GM12878 (cell line): ENCODE measurements at regions of chr5 and their contacts with region 1.

Region 1: DNA sequence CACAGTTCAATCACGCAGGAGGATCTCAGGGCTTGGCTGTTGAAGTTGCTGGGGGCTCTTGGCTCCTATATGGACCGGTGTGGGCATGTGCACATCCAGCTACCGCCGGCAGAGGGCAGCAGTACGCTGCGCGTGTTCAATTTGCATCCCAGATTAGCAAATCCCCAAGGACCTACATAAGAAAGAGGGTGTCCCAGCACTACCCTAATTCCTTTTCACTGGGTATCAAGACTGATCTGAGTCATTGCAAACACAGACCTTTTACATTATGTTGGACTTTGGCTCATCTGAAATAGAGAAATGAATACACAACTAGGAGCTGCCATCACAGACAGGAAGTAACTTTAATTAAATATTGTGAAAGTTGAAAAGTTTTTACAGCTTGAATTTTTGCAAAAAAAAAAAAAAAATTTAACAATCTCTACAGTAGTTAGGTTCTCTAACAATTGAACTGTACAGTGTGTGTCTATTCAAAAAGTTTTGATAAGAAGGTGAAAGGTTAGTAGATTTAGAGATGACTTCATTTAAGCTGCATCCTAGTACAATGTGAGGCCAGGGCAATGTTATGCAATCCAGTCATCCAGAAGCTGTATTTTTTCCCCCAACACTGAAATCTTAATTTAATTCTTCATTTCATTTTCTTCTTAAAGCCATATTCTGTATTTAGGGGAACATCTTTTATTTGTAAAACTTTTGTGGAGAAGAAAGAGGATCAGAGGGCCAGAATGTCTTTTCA is 404.0 kb downstream of the EBF1 start:
- DNase-seq: peak; percentile 85
- ATAC-seq: peak; percentile 94
- H3K4me3 ChIP-seq: no peak overlapping the region
- H3K27ac ChIP-seq: no peak overlapping the region
- H3K4me1 ChIP-seq: no peaks in the 10 kb centered on the region
- H3K27me3 ChIP-seq: no peaks in the 10 kb centered on the region
- CTCF ChIP-seq: peak; percentile 88 to 97 (median 88)
- EP300 ChIP-seq: peak; percentile 41 to 66; a peak in 2 of 4 replicates
- POLR2A ChIP-seq: no peak
- RAD21 ChIP-seq: peak; percentile 88

Region 2: DNA sequence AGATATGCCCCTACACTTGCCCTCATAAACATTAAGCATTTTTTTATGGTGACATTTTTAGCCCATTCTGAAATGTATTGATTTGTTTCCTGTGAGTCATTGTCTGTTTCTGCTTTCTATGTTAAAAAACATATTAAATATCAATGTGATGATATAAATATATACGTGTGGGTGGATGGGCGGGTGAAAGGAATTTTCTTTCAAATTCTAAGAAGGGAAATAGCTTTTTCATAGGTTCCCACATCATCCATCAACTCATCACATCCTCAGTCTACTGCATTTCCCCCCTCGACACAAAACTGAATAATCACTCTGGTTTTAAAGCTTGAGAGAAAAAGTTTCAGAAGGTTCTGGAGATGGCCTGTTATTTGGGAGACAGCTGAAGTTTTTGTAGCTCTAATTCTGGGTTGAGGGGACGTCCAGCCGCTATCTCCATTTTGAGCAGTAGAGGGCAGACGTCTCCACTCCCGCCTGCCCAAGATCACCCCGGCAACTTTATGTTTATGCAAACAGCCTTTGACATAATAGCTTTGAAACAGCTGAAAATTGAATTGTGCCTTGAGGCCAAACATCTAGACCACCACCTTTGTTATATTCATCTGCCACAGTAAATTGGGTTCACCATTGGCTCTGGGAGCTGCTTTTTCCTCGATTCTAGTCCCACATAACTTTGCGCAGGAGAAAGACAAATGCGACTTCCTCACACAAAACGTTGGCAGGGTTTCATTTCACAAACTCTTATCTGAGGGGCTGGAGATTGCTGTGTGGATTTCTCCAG is 620.6 kb before region 1 on chr5:
- CTCF ChIA-PET with region 1: interaction called, 27 read pairs
- POLR2A ChIA-PET with region 1: no interaction called
- RAD21 ChIA-PET with region 1: interaction called, 11 read pairs
- SMC1A ChIA-PET with region 1: interaction called, 6 read pairs
- in situ Hi-C with region 1: no loop called
- intact Hi-C with region 1: loop called (anchors 5 kb)
- DNase-seq: no peak
- ATAC-seq: peak; percentile 94
- H3K4me3 ChIP-seq: no peak overlapping the region
- H3K27ac ChIP-seq: no peak overlapping the region
- H3K4me1 ChIP-seq: no peaks in the 10 kb centered on the region
- H3K27me3 ChIP-seq: no peaks in the 10 kb centered on the region; a peak in 1 of 4 replicates
- CTCF ChIP-seq: peak; percentile 78 to 81 (median 80)
- EP300 ChIP-seq: no peak
- POLR2A ChIP-seq: no peak
- RAD21 ChIP-seq: peak; percentile 71

Region 3: DNA sequence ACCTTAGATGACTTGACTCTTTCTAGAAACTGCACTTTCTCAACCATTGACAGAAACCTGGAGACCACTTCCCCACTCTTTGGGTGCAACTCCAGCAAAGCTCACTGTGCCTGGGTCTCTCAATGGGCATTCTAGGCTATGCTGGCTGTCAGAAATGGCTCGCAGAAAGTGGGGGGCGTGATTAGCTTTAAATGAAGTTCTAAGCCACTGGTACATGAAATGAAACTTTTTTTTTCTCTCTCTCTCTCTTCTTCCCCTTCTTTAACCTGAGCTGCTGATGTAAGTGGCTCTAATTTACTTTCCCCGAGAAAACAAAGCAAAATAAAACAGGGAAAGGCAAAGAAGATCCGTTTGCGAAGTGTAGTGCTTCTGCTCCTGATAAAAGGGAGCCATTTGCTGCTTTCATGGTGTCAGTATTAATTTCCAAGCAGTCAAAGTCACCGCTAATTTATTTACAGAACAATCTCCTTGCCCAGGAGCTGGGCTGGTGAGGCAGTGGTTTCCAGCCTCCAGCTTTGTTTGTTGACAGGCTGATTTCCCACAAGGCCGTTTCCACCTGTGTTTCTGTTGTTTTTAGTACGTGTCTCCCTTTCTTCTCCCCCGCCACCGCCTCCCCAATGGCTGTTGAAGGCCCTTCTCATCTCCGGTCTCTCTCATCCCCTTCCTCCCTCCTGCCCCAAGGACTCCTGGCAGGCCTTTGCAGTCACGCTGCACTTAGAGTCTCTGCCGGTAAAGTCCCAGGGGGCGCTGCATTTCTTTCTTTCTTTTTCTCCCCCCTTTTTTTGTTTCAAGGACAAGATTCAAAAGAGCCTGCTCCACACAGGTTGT is 18.9 kb before region 1 on chr5:
- CTCF ChIA-PET with region 1: interaction called, 18 read pairs
- POLR2A ChIA-PET with region 1: no interaction called
- RAD21 ChIA-PET with region 1: interaction called, 10 read pairs
- SMC1A ChIA-PET with region 1: interaction called, 11 read pairs
- in situ Hi-C with region 1: no loop called
- intact Hi-C with region 1: no loop called
- DNase-seq: no peak
- ATAC-seq: peak; percentile 83
- H3K4me3 ChIP-seq: no peak overlapping the region
- H3K27ac ChIP-seq: no peak overlapping the region
- H3K4me1 ChIP-seq: peaks cover 3% of the 10 kb centered on the region; the same call in 1 of the 2 replicates
- H3K27me3 ChIP-seq: no peaks in the 10 kb centered on the region; a peak in 1 of 4 replicates
- CTCF ChIP-seq: peak; percentile 19 to 37 (median 31); a peak in 4 of 6 replicates
- EP300 ChIP-seq: no peak
- POLR2A ChIP-seq: no peak
- RAD21 ChIP-seq: 0 out of 2 replicates have a peak, but pooled peaks have one; percentile 25

Region 4: GRCh38 chr5:158770506-158770905 is 74.7 kb after region 1 on chr5:
- CTCF ChIA-PET with region 1: interaction called, 15 read pairs
- POLR2A ChIA-PET with region 1: no interaction called
- RAD21 ChIA-PET with region 1: interaction called, 18 read pairs
- SMC1A ChIA-PET with region 1: interaction called, 13 read pairs
- in situ Hi-C with region 1: no loop called
- intact Hi-C with region 1: no loop called
- DNase-seq: no peak
- ATAC-seq: no peak
- H3K4me3 ChIP-seq: no peak overlapping the region
- H3K27ac ChIP-seq: no peak overlapping the region
- H3K4me1 ChIP-seq: peaks cover 4% of the 10 kb centered on the region; the same call in 1 of the 2 replicates
- H3K27me3 ChIP-seq: no peaks in the 10 kb centered on the region
- CTCF ChIP-seq: peak in 2 of 3 experiments; percentile 17 to 38; a peak in 2 of 6 replicates
- EP300 ChIP-seq: no peak
- POLR2A ChIP-seq: no peak
- RAD21 ChIP-seq: 0 out of 2 replicates have a peak, but pooled peaks have one; percentile 15

Region 5: DNA sequence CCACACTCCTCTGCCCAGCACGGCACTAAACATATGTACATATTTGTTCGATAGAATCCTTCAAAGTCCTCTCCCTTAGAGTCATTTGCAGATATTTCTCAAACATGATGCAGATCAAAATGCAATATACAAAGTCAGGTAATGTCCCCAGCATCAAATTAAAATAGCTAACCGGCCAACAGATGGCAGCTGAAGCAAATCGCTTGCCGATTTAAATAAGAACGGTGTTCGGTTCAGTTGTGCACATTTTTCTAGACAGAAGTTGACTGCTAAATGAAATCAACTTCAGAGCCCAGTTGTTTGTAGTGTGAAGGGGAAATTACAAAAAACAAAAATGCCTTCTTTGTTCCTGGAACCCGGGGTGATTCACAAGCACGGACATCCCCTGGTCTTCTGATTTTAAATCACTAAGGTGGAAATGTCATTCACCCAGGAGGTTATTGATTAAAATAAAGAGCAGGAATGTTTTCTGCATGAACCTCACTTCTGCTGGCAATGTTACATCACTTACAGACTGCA is 184.8 kb after region 1 on chr5:
- CTCF ChIA-PET with region 1: interaction called, 19 read pairs
- POLR2A ChIA-PET with region 1: interaction called, 4 read pairs
- RAD21 ChIA-PET with region 1: interaction called, 62 read pairs
- SMC1A ChIA-PET with region 1: interaction called, 31 read pairs
- in situ Hi-C with region 1: no loop called
- intact Hi-C with region 1: loop called (anchors 1 kb)
- DNase-seq: no peak
- ATAC-seq: peak; percentile 31
- H3K4me3 ChIP-seq: peak overlapping the region; percentile 24; the same call in 1 of the 2 replicates
- H3K27ac ChIP-seq: peak overlapping the region; percentile 83
- H3K4me1 ChIP-seq: peaks cover 66% of the 10 kb centered on the region
- H3K27me3 ChIP-seq: no peaks in the 10 kb centered on the region
- CTCF ChIP-seq: peak in 2 of 3 experiments; percentile 29 to 53; a peak in 3 of 6 replicates
- EP300 ChIP-seq: peak in 1 of 2 experiments; percentile 2; a peak in 1 of 4 replicates
- POLR2A ChIP-seq: no peak
- RAD21 ChIP-seq: peak; percentile 56

Region 6: DNA sequence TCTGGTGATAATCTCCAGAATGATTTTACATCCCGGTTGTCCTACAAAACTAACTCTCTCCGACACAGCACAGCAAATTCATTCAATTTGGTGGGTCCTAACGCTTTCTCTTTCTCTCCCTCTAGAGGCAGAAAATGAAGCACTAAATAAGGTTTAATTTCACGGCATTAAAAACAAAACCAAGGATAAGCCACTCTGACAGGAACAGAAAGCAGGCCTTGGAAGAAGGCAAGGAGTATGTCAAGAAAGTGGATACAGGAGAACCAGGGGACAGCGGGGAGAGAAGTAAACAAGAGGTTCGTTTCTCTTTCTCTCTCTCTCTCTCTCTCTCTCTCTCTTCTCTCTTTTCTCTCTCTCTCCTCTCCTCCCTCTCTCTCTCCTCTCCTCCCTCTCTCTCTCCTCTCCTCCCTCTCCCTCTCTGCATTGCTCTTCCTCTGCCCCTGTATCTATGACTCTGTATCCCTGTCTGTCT is 354.1 kb after region 1 on chr5:
- CTCF ChIA-PET with region 1: interaction called, 5 read pairs
- POLR2A ChIA-PET with region 1: no interaction called
- RAD21 ChIA-PET with region 1: interaction called, 8 read pairs
- SMC1A ChIA-PET with region 1: interaction called, 6 read pairs
- in situ Hi-C with region 1: no loop called
- intact Hi-C with region 1: loop called (anchors 10 kb)
- DNase-seq: no peak
- ATAC-seq: peak; percentile 1
- H3K4me3 ChIP-seq: peak overlapping the region; percentile 49
- H3K27ac ChIP-seq: peak overlapping the region; percentile 70
- H3K4me1 ChIP-seq: peaks cover 17% of the 10 kb centered on the region
- H3K27me3 ChIP-seq: no peaks in the 10 kb centered on the region
- CTCF ChIP-seq: peak; percentile 15 to 45 (median 32); a peak in 5 of 6 replicates
- EP300 ChIP-seq: no peak
- POLR2A ChIP-seq: no peak
- RAD21 ChIP-seq: peak; percentile 59

Region 7: GRCh38 chr5:159133041-159133741 is 437.4 kb after region 1 on chr5:
- CTCF ChIA-PET with region 1: interaction called, 26 read pairs
- POLR2A ChIA-PET with region 1: no interaction called
- RAD21 ChIA-PET with region 1: interaction called, 21 read pairs
- SMC1A ChIA-PET with region 1: interaction called, 42 read pairs
- in situ Hi-C with region 1: no loop called
- intact Hi-C with region 1: loop called (anchors 1 kb)
- DNase-seq: peak; percentile 28
- ATAC-seq: peak; percentile 89
- H3K4me3 ChIP-seq: no peak overlapping the region
- H3K27ac ChIP-seq: no peak overlapping the region
- H3K4me1 ChIP-seq: no peaks in the 10 kb centered on the region
- H3K27me3 ChIP-seq: 0 out of 4 replicates have a peak, but pooled peaks cover 0 to 4% of the 10 kb centered on the region in 2 experiments
- CTCF ChIP-seq: peak; percentile 64 to 83 (median 73)
- EP300 ChIP-seq: no peak; a peak in 1 of 4 replicates
- POLR2A ChIP-seq: no peak
- RAD21 ChIP-seq: peak; percentile 88

Region 8: DNA sequence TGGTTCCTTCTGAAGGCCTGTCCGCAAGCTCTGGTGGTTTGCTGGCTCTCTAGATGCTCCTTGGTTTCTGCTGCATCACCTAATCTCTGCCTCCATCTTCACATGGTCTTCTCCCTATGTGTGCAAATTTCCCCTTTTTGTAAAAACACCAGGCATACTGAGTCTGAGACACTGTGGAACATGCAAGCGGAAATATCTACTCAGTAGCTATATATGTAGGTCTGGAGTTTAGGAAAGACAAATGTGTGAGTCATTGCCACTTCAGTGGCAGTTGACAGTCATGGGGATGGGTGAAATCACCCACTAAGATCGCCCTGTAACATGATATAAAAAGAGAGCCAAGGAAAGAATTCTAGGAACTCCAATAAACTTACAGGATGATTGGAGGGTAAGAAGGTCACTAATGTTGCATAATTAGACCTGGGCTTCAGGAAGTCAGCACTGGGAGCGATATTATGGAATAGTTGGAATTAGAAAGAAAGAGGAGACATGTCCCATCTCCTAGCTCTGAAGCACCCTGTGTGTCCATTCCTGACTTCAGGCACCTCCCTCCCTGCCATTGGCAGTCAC is 544.6 kb after region 1 on chr5:
- CTCF ChIA-PET with region 1: no interaction called
- POLR2A ChIA-PET with region 1: no interaction called
- RAD21 ChIA-PET with region 1: no interaction called
- SMC1A ChIA-PET with region 1: no interaction called
- in situ Hi-C with region 1: no loop called
- intact Hi-C with region 1: no loop called
- DNase-seq: no peak
- ATAC-seq: no peak
- H3K4me3 ChIP-seq: no peak overlapping the region
- H3K27ac ChIP-seq: no peak overlapping the region
- H3K4me1 ChIP-seq: no peaks in the 10 kb centered on the region
- H3K27me3 ChIP-seq: no peaks in the 10 kb centered on the region
- CTCF ChIP-seq: no peak
- EP300 ChIP-seq: no peak
- POLR2A ChIP-seq: no peak
- RAD21 ChIP-seq: no peak